Activated CD4-positive, alpha-beta memory T cell treated with anti-CD3 and anti-CD28 coated beads, Interleukin-2, amount 10 ng/mL, durations not matched to agents 7 days and 5 days (primary cell): ENCODE measurements at regions of chr20 and their contacts with region 1.

Region 1: GRCh38 chr20:3679749-3680700 is 1.8 kb downstream of the ADAM33 start:
- DNase-seq: no peak
- H3K4me3 Mint-ChIP-seq: no peak overlapping the region
- H3K27ac Mint-ChIP-seq: no peak overlapping the region
- H3K4me1 Mint-ChIP-seq: peaks cover 4% of the 10 kb centered on the region
- H3K27me3 Mint-ChIP-seq: peaks cover 70% of the 10 kb centered on the region

Region 2: GRCh38 chr20:3658716-3659491 is 21.1 kb before region 1 on chr20:
- CTCF ChIA-PET with region 1: interaction called, 22 read pairs
- POLR2A ChIA-PET with region 1: interaction called, 4 read pairs
- DNase-seq: peak; percentile 59
- H3K4me3 Mint-ChIP-seq: no peak overlapping the region
- H3K27ac Mint-ChIP-seq: peak overlapping the region; percentile 53
- H3K4me1 Mint-ChIP-seq: peaks cover 32% of the 10 kb centered on the region
- H3K27me3 Mint-ChIP-seq: peaks cover 56% of the 10 kb centered on the region

Region 3: DNA sequence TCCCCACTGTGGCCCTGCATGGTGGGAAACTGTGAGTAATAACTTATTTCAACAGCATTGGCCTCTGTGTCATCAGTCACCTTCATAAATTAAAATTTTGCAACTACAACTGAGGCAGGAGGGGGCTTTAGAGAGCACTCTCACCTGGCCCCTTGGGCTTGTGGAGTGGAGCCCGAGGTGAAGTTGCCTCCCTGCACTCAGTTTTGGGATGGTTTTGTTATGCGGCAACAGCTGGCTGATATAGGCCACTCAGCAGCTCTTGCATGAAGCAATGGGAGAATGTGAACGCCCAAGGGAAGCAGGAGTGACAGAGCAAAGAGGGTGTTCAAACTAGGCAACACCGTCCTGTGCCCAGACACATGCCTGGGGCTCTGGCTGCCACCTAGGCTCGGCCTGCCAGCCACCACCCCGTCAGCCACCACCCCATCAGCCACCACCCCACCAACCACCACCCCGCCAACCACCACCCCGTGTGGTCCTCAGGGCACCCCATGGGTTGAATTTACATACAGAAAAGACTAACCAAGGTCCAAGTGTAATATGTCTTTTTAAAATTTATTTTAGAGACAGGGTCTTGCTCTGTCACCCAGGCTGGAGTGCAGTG is 12.5 kb before region 1 on chr20:
- CTCF ChIA-PET with region 1: interaction called, 22 read pairs
- POLR2A ChIA-PET with region 1: interaction called, 9 read pairs
- DNase-seq: no peak
- H3K4me3 Mint-ChIP-seq: no peak overlapping the region
- H3K27ac Mint-ChIP-seq: no peak overlapping the region
- H3K4me1 Mint-ChIP-seq: peaks cover 39% of the 10 kb centered on the region
- H3K27me3 Mint-ChIP-seq: peaks cover 75% of the 10 kb centered on the region

Region 4: GRCh38 chr20:4026093-4026601 is 346.1 kb after region 1 on chr20:
- CTCF ChIA-PET with region 1: no interaction called
- POLR2A ChIA-PET with region 1: no interaction called
- DNase-seq: no peak
- H3K4me3 Mint-ChIP-seq: no peak overlapping the region
- H3K27ac Mint-ChIP-seq: no peak overlapping the region
- H3K4me1 Mint-ChIP-seq: no peaks in the 10 kb centered on the region
- H3K27me3 Mint-ChIP-seq: peaks cover 54% of the 10 kb centered on the region